Vagina (tissue), 2 donors: ENCODE measurements at regions of chr6 and their contacts with region 1.

Region 1: DNA sequence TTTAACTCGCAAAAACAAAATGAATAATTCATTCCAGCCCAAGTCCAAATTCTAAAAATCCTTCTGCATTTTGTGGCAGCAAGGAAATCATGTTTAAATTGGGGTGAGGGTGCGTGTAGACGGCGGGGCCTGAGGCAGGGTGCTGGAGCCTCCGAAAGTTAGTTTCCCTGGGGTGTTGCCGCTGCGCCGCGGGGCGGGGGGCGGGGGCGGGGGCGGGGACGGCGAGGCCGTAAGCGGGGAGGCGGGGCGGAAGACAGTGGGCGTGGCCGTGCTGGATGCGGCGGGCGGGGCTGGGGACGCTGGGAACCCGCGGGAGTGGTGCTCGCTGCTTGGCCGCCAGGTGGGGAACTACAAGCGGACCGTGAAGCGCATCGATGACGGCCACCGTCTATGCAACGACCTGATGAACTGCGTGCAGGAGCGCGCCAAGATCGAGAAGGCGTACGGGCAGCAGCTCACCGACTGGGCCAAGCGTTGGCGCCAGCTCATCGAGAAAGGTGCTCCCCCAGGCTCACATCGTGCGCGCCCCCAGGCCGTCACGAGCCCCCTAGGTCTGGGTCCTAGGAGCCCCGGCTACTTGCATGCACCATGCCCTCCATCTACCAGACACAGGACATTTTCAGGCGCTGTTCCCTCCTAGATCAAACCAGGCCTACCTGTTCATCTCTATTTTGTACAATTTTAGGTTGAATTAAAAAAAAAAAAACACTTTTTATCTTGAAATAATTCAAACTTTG is 29.0 kb downstream of the SPDEF start:
- DNase-seq: no peak
- H3K4me3 ChIP-seq: peak overlapping the region; percentile 22 to 39
- H3K27ac ChIP-seq: peak overlapping the region; percentile 72
- H3K4me1 ChIP-seq: peaks cover 12% of the 10 kb centered on the region
- H3K27me3 ChIP-seq: no peaks in the 10 kb centered on the region
- CTCF ChIP-seq: peak in 2 of 3 experiments; percentile 60 to 69
- POLR2A ChIP-seq: no peak

Region 2: DNA sequence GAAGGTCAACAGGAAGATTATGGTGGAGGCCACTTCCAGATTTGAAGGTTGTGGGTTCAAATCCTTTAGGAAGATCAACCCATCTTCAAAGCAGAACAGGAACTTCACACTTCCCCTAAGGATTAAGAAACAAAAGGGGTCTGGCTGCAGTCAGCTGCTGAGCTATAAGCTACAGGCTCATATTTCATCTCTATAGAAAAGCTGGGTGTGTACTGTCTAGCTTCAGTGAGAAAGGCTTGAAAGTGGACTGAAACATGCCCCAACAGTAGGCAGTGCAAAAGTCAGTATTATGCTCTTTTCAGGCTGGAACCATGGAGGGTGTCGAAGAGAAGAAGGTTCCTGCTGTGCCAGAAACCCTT is 89.0 kb after region 1 on chr6:
- intact Hi-C with region 1: loop called (anchors 5 kb)
- DNase-seq: no peak
- H3K4me3 ChIP-seq: no peak overlapping the region
- H3K27ac ChIP-seq: no peak overlapping the region
- H3K4me1 ChIP-seq: no peaks in the 10 kb centered on the region
- H3K27me3 ChIP-seq: no peaks in the 10 kb centered on the region
- CTCF ChIP-seq: no peak
- POLR2A ChIP-seq: no peak